Caco-2 (cell line): ENCODE measurements at regions of chr10 and their contacts with region 1.

Region 1: GRCh38 chr10:16950656-16951601 is 133.7 kb upstream of the RSU1 start:
- DNase-seq: no peak
- H3K4me3 ChIP-seq: no peak overlapping the region
- H3K4me3 Mint-ChIP-seq: no peak overlapping the region
- H3K27ac Mint-ChIP-seq: no peak overlapping the region
- H3K4me1 ChIP-seq: no peaks in the 10 kb centered on the region
- H3K4me1 Mint-ChIP-seq: no peaks in the 10 kb centered on the region
- H3K27me3 ChIP-seq: no peaks in the 10 kb centered on the region
- H3K27me3 Mint-ChIP-seq: peaks cover 15% of the 10 kb centered on the region
- CTCF ChIP-seq: no peak

Region 2: GRCh38 chr10:16341637-16342036 is 609.3 kb before region 1 on chr10:
- CTCF ChIA-PET with region 1: no interaction called
- POLR2A ChIA-PET with region 1: no interaction called
- intact Hi-C with region 1: loop called (anchors 5 kb)
- DNase-seq: no peak
- H3K4me3 ChIP-seq: no peak overlapping the region
- H3K4me3 Mint-ChIP-seq: no peak overlapping the region
- H3K27ac Mint-ChIP-seq: no peak overlapping the region
- H3K4me1 ChIP-seq: no peaks in the 10 kb centered on the region
- H3K4me1 Mint-ChIP-seq: no peaks in the 10 kb centered on the region
- H3K27me3 ChIP-seq: no peaks in the 10 kb centered on the region
- H3K27me3 Mint-ChIP-seq: peaks cover 5% of the 10 kb centered on the region
- CTCF ChIP-seq: no peak

Region 3: DNA sequence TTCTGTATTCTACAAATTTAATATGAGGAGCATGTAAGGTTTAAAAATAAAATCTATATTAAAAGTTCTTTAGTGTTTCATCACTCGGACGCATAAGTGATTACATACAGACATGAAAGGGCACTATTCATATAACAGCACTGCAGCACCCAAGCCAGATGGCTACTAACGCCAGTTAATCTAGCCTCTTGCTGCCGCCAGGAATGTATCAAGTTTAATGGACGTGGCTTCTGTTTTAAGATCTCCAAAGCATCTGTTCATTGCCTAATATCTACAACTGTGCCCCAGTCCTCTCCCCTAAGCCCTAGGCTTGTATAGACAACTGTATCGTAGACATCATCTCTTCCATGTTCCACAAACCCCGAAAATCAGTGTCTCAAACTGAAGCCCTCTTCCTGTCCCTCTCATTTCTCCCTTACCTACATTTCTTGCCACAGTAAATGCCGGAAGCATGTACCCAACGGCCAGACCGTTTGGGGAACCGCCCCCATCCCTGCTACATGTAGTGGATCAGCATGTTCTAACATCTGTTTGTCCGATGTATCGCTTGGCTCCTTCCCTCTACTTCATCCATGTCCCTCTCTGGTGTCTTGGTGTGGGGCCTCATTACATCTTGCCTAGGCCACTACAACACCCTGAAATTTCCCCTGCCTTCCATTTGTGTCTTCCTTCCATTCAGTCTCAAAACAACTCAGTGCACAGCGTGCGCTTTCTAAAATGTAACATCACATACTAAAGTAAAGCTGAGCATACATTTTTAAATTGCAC is 13.8 kb after region 1 on chr10:
- CTCF ChIA-PET with region 1: no interaction called
- POLR2A ChIA-PET with region 1: no interaction called
- intact Hi-C with region 1: no loop called
- DNase-seq: no peak
- H3K4me3 ChIP-seq: no peak overlapping the region
- H3K4me3 Mint-ChIP-seq: no peak overlapping the region
- H3K27ac Mint-ChIP-seq: no peak overlapping the region
- H3K4me1 ChIP-seq: no peaks in the 10 kb centered on the region
- H3K4me1 Mint-ChIP-seq: no peaks in the 10 kb centered on the region
- H3K27me3 ChIP-seq: no peaks in the 10 kb centered on the region
- H3K27me3 Mint-ChIP-seq: peaks cover 7% of the 10 kb centered on the region
- CTCF ChIP-seq: no peak

Region 4: DNA sequence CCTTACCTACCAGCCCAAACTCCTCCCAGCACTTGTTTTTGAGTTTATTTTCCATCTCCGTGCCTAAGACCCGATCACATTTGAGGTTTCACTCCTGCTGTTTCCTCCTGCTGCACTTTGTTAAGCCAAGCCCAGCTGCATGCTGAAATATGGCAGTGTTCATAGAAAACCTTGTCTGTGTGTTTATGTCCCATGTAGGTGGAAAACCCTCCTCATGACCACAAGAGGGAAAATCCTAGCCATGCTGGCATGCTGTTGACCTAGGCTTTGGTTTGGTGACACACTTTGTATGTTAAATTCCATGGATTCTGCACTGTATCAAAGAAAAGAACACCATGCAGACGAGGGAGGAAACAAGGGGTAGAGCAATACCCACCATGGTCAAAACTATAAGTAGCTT is 24.3 kb after region 1 on chr10:
- CTCF ChIA-PET with region 1: no interaction called
- POLR2A ChIA-PET with region 1: no interaction called
- intact Hi-C with region 1: loop called (anchors 1 kb)
- DNase-seq: no peak
- H3K4me3 ChIP-seq: no peak overlapping the region
- H3K4me3 Mint-ChIP-seq: no peak overlapping the region
- H3K27ac Mint-ChIP-seq: no peak overlapping the region
- H3K4me1 ChIP-seq: no peaks in the 10 kb centered on the region
- H3K4me1 Mint-ChIP-seq: no peaks in the 10 kb centered on the region
- H3K27me3 ChIP-seq: no peaks in the 10 kb centered on the region
- H3K27me3 Mint-ChIP-seq: no peaks in the 10 kb centered on the region
- CTCF ChIP-seq: no peak